Activated naive CD4-positive, alpha-beta T cell treated with anti-CD3 and anti-CD28 coated beads for 36 hours (primary cell): ENCODE measurements at regions of chr5 and their contacts with region 1.

Region 1: DNA sequence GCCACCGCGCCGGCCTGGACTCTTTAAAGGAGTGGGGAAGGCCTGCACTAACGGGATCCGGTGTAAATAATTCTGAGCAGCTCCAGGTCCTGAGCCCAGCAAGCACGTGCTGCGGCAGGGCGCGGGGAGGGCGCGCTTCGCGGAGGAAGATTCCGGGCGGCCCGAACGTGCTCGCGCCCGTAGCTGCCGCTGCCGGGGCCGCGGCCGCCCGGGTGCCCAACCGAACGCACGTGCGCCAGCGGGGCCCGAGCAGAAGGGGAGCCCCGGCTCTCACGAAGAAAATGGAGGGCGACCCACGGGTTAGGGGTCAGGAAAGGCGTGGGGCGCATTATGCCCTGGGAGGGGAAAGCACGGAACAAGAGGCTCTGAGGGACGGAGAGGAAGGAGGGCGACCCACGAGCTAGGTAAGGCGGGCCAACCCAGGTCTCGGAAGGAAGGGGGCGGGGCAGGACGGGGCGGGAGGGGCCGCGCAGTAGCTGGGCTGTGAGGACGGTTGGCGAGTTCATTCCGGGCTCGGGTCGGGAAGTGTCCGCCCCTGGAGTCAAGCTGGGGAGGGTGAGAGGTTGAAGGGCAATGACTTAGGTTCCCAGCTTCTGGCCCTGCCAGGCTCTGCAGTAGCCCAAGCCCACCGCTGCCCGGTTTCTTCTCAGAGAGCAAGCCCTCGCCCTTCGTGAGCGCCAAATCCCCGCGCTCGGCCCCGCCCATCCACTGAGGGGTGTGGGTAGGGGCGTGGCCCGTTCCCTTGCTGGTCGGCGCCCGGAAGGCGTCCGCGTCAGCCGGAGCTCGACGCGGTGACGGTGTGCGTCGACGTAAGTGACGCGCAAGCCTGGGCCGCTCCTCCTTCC is at the start of gene ZNF131:
- DNase-seq: peak; percentile 96
- H3K4me3 Mint-ChIP-seq: peak within 1 kb of the TSS; percentile 99
- H3K27ac Mint-ChIP-seq: peak within 1 kb of the TSS; percentile 96
- H3K4me1 Mint-ChIP-seq: peaks cover 38% of the 10 kb centered on the region
- H3K27me3 Mint-ChIP-seq: no peaks in the 10 kb centered on the region
- total RNA-seq, gene ZNF131: 25.0 to 29.6 TPM

Region 2: GRCh38 chr5:43008369-43009153 is 112.4 kb before region 1 on chr5:
- CTCF ChIA-PET with region 1: no interaction called
- intact Hi-C with region 1: loop called (anchors 5 kb)
- DNase-seq: peak; percentile 93
- H3K4me3 Mint-ChIP-seq: peak overlapping the region; percentile 79
- H3K27ac Mint-ChIP-seq: peak overlapping the region; percentile 97
- H3K4me1 Mint-ChIP-seq: peaks cover 24% of the 10 kb centered on the region
- H3K27me3 Mint-ChIP-seq: no peaks in the 10 kb centered on the region

Region 3: DNA sequence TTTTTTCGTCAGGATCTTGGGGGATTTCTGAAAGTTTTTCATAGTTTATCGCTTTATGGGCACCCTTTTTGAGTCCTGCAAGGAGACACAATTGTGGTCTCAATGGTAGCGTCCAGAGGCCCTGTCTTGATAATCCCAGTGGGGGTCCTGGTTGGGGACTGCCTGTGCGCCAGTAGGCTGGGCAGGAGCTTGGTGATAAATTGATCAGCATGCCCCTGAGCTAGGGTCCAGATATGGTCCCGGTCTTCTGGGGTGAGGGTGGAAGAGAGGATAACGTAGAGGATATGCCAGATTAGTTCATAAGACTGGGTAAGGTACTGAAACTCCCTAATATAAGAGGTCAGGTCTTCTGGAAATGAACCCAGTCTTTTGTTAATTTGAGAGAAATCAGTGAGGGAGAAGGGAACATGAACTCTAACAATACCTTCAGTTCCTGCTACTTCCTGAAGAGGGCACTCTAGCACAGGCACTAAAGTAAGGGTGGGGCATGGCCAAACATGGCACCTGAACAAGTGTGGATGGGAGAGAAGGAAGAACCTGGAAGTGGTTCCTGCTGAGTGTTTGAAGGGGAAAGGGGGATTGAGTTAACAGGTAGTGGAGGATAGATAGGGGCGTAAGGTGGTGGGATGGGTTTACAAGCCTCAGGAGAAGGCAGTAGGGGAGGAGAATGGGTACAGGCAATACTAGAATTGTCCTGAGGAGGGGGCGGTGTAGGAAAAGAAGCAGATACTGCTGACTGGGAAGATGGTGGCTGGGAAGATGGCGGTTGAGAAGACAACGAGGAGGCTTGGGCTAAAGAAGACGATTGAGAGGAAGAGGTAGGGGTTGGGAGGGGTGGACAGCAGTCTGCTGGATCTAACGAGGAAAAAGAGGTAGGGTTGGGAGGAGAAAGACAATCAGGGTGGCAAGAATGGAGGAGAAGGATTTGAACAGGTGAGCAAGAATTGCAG is 47.1 kb before region 1 on chr5:
- CTCF ChIA-PET with region 1: interaction called, 5 read pairs
- intact Hi-C with region 1: loop called (anchors 1 kb)
- DNase-seq: peak; percentile 70
- H3K4me3 Mint-ChIP-seq: no peak overlapping the region
- H3K27ac Mint-ChIP-seq: peak overlapping the region; percentile 43
- H3K4me1 Mint-ChIP-seq: peaks cover 39% of the 10 kb centered on the region
- H3K27me3 Mint-ChIP-seq: no peaks in the 10 kb centered on the region

Region 4: GRCh38 chr5:43191740-43192557 is 71.0 kb after region 1 on chr5 and contains the start of gene NIM1K:
- CTCF ChIA-PET with region 1: no interaction called
- intact Hi-C with region 1: loop called (anchors 1 kb)
- DNase-seq: peak; percentile 60
- H3K4me3 Mint-ChIP-seq: peak within 1 kb of the TSS; percentile 72
- H3K27ac Mint-ChIP-seq: no peak within 1 kb of the TSS
- H3K4me1 Mint-ChIP-seq: peaks cover 31% of the 10 kb centered on the region
- H3K27me3 Mint-ChIP-seq: peaks cover 20% of the 10 kb centered on the region
- total RNA-seq, gene NIM1K: 0.54 to 0.57 TPM

Region 5: GRCh38 chr5:43514816-43515677 is 394.1 kb after region 1 on chr5 and contains the start of gene C5orf34:
- CTCF ChIA-PET with region 1: no interaction called
- intact Hi-C with region 1: loop called (anchors 1 kb)
- DNase-seq: peak; percentile 98
- H3K4me3 Mint-ChIP-seq: peak within 1 kb of the TSS; percentile 94
- H3K27ac Mint-ChIP-seq: peak within 1 kb of the TSS; percentile 99
- H3K4me1 Mint-ChIP-seq: peaks cover 25% of the 10 kb centered on the region
- H3K27me3 Mint-ChIP-seq: no peaks in the 10 kb centered on the region
- total RNA-seq, gene C5orf34: 14.7 to 16.3 TPM